MCF 10A (cell line): ENCODE measurements at regions of chr7 and their contacts with region 1.

Region 1: DNA sequence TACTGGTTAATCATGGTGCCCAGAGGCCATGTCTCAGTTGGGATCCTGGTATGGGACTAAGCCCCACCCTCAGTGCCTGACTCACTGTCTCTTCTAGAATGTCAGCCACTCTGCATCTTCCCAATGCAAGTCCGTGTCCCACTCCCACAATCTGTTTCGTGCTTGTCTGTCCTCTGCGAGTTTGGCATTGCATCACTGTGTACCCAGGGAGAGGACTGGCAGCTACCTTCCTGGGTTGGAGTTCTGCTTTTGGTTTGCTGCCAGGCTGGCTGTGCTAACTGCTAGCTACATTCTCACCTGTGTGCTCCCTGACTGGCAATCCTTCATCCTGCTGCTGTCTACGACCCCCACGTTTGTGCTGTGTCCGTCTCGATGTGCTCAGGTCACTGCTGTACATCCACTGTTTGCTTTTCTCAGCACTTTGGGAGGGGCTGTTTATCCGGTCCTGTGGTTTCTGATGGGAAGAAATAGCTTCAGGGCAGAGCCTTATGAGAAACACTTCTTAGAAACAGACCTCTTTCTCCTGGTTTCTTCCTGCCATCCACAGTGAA is 56.0 kb upstream of the GLI3 start:
- DNase-seq: peak; percentile 97
- H3K4me3 Mint-ChIP-seq: peak overlapping the region; percentile 70
- H3K27ac Mint-ChIP-seq: peak overlapping the region; percentile 92
- H3K4me1 Mint-ChIP-seq: peaks cover 28% of the 10 kb centered on the region
- H3K27me3 Mint-ChIP-seq: no peaks in the 10 kb centered on the region
- CTCF ChIP-seq: no peak

Region 2: GRCh38 chr7:42254202-42254601 is 38.8 kb before region 1 on chr7:
- CTCF ChIA-PET with region 1: no interaction called
- POLR2A ChIA-PET with region 1: no interaction called
- intact Hi-C with region 1: no loop called
- DNase-seq: peak; percentile 84
- H3K4me3 Mint-ChIP-seq: no peak overlapping the region
- H3K27ac Mint-ChIP-seq: peak overlapping the region; percentile 65
- H3K4me1 Mint-ChIP-seq: peaks cover 13% of the 10 kb centered on the region
- H3K27me3 Mint-ChIP-seq: no peaks in the 10 kb centered on the region
- CTCF ChIP-seq: no peak

Region 3: DNA sequence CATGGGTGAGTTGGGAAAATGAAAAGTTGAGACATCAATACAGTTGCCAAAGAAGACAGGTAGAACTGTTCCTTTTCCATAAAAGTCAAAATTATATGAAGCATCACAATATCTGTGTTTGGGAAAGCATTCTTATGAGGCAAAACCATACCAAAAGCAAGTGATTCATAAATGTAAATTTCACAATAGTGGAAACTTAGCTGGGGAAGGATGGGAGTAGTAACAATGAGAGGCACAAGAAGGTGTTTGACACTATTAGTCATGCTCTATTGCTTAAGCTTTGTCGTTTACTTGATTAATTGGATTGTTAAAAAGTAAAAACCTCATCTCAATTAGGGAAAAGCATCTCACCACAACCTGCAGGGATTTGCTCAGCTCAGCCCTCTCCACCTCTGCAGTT is 378.6 kb after region 1 on chr7:
- CTCF ChIA-PET with region 1: no interaction called
- POLR2A ChIA-PET with region 1: interaction called, 14 read pairs
- intact Hi-C with region 1: no loop called
- DNase-seq: peak; percentile 95
- H3K4me3 Mint-ChIP-seq: no peak overlapping the region
- H3K27ac Mint-ChIP-seq: peak overlapping the region; percentile 89
- H3K4me1 Mint-ChIP-seq: peaks cover 42% of the 10 kb centered on the region
- H3K27me3 Mint-ChIP-seq: no peaks in the 10 kb centered on the region
- CTCF ChIP-seq: no peak